ENCODE measurements at regions of chr3 and their contacts with region 1.

Region 1: GRCh38 chr3:56342475-56342874 is 125.8 kb downstream of the ERC2 start:
- DNase-seq: no peak
- H3K4me3 ChIP-seq: no peak overlapping the region
- H3K27ac ChIP-seq: no peak overlapping the region
- H3K4me1 ChIP-seq: peaks cover 0 to 12% of the 10 kb centered on the region in 2 experiments; a peak in 1 of 4 replicates
- H3K27me3 ChIP-seq: no peaks in the 10 kb centered on the region
- CTCF ChIP-seq: no peak
- EP300 ChIP-seq: no peak
- RAD21 ChIP-seq: no peak

Region 2: DNA sequence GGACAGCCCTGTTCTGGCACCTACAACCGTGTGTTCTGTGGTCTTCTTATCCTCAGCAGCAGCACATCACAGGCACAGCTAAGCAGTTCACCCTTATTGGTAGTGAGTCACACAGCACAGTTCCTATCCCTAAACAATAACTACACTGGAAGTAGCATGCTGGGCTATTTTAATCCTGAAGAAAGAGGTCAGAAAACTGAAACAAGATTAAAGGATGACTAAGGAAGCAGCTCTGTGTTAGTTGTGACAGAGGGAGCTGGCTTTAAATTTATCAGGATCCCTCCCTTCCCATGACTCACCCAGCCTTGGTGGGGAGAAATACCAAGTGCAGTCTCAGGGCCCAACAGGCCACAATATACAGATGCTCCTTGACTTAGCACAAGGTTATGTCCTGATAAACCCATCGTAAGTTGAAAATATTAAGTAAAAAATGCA is 18.5 kb before region 1 on chr3:
- CTCF ChIA-PET with region 1: interaction called, 25 read pairs
- POLR2A ChIA-PET with region 1: no interaction called
- DNase-seq: no peak
- H3K4me3 ChIP-seq: no peak overlapping the region
- H3K27ac ChIP-seq: peak overlapping the region in 1 of 2 experiments; percentile 41; a peak in 2 of 4 replicates
- H3K4me1 ChIP-seq: no peaks in the 10 kb centered on the region
- H3K27me3 ChIP-seq: no peaks in the 10 kb centered on the region
- CTCF ChIP-seq: no peak
- EP300 ChIP-seq: no peak
- RAD21 ChIP-seq: no peak

Region 3: DNA sequence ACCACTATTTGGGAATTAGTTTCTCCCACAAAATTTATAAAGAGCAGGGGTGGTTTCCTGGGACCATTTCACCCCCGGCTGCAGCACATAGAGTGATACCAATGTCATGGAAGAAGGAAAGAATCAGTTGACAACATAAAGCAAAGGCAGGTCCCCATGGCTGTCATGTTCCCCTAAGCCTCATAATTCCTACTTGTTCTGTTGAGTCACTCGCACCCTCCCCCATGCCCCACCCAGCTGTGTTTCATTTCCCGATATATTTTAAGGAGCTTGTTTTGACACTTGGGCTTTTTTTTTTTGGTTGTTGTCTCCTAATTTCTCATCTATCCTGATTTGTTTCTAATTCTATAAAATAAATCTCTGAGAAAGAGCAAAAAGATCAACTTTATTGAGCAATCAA is 100.9 kb after region 1 on chr3:
- CTCF ChIA-PET with region 1: interaction called, 81 read pairs
- POLR2A ChIA-PET with region 1: no interaction called
- DNase-seq: no peak
- H3K4me3 ChIP-seq: no peak overlapping the region
- H3K27ac ChIP-seq: no peak overlapping the region
- H3K4me1 ChIP-seq: no peaks in the 10 kb centered on the region; a peak in 1 of 4 replicates
- H3K27me3 ChIP-seq: no peaks in the 10 kb centered on the region
- CTCF ChIP-seq: no peak
- EP300 ChIP-seq: no peak
- RAD21 ChIP-seq: no peak

Region 4: DNA sequence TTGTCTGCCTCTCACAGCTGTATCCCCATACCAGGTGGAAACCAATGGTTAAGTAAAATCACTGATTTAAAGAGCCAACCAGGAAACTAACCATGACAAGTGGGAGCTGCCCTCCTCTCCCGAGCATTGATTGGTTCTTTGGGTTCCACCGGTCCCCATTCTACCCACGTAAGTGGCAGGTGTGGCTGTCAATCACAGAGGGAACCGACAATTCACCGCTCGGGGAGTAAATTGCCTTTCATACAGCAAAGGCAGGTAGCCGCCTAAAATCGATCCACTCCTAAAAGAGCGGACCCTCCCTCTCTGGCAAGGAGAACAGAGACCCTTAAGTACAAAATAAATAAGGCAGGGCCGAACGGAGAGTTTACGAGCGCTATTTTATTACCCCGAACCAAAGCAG is 124.6 kb after region 1 on chr3:
- CTCF ChIA-PET with region 1: interaction called, 27 read pairs
- POLR2A ChIA-PET with region 1: interaction called, 3 read pairs
- DNase-seq: peak; percentile 89
- H3K4me3 ChIP-seq: peak overlapping the region; percentile 64 to 65
- H3K27ac ChIP-seq: no peak overlapping the region
- H3K4me1 ChIP-seq: no peaks in the 10 kb centered on the region; a peak in 1 of 4 replicates
- H3K27me3 ChIP-seq: no peaks in the 10 kb centered on the region
- CTCF ChIP-seq: no peak
- EP300 ChIP-seq: no peak
- RAD21 ChIP-seq: no peak

Region 5: GRCh38 chr3:56494686-56495322 is 152.3 kb after region 1 on chr3:
- CTCF ChIA-PET with region 1: interaction called, 58 read pairs
- POLR2A ChIA-PET with region 1: no interaction called
- DNase-seq: peak; percentile 66
- H3K4me3 ChIP-seq: no peak overlapping the region; a peak in 1 of 4 replicates
- H3K27ac ChIP-seq: no peak overlapping the region
- H3K4me1 ChIP-seq: no peaks in the 10 kb centered on the region
- H3K27me3 ChIP-seq: no peaks in the 10 kb centered on the region
- CTCF ChIP-seq: peak; percentile 97
- EP300 ChIP-seq: no peak
- RAD21 ChIP-seq: peak; percentile 72

Measured in SK-N-SH (cell line).